GM12878 (cell line): ENCODE measurements at regions of chr22 and their contacts with region 1.

Region 1: DNA sequence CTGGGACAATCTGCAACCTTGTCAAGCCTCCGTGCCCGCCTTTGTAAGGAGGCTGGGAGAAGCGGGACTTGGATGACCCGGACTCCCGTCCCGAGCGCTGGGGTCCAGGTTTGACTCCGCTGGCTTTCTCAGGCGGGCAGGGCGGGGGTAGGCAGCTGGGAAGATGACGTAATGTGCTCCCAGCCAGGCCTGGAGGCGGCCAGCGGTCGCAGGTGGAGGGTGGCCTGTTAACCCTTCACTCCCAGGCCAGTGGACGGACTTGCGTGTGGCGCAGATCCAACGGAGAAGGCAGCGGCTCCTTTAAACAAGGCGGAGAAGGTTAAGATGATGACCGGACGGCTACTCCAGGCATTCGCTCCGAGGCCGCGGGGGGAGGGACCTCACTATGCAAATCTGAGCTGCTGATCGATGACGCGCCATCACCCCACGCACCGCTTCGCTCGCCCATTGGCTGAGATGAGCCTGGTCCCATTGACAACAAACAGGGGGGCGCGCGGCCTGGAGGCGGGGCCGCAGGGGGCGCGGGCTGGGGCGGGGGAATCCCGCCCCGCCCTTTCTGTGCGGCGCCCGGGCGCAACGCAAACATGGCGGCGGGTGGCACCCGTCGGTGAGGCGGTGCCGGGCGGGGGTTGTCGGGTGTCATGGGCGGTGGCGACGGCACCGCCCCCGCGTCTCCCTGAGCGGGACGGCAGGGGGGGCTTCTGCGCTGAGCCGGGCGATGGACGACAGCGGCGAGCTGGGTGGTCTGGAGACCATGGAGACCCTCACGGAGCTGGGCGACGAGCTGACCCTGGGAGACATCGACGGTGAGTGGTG is at the start of gene SREBF2:
- DNase-seq: peak; percentile 99
- ATAC-seq: peak; percentile 92
- H3K4me3 ChIP-seq: peak within 1 kb of the TSS; percentile 92
- H3K27ac ChIP-seq: peak within 1 kb of the TSS; percentile 95
- H3K4me1 ChIP-seq: peaks cover 12% of the 10 kb centered on the region
- H3K27me3 ChIP-seq: no peaks in the 10 kb centered on the region
- CTCF ChIP-seq: 0 out of 6 replicates have a peak, but pooled peaks of 1 of the 3 experiments have one; percentile 1
- EP300 ChIP-seq: peak; percentile 64 to 75
- POLR2A ChIP-seq: peak; percentile 94
- RAD21 ChIP-seq: no peak
- polyA plus RNA-seq, gene SREBF2: 2.4 to 3.6 TPM

Region 2: DNA sequence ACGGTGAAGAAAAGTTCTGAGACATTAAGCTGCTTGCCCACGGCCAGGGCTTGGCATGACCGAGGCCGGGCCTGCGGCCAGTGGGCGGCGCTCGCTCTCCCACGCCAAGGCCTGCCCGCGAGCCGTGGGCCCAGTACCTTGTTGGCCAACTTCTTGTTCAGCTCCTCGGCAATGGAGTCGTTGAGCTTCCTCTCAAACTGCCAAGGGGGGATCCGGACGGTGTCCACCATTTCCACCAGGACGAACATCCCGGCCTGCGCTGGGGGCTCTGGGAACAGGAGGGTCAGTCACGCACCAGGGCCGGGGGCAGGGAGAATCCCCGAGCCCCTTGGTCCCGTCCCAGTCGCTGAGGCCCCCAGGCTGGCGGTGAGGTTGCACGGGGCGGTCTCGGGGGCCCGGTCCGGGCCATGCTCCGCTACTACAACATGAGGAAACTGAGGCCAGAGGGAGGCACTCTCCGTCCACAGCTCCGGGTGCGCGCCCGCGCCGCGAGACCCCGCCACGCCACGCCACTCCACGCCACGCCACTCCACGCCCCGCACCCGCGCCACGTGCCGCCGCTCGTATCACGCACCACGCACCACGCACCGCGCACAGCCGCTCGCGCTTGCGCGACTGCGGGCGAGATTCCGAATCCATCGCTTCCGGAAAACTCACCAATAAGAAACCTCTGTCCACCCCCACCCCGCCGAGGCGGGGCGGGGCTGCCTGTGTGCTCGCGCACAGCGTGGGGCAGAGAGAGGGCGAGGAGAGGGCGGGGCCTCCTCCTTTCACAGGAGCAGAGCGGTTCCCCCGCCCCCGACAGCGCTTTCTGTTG is 288.7 kb before region 1 on chr22 and contains the start of gene POLR3H:
- CTCF ChIA-PET with region 1: no interaction called
- POLR2A ChIA-PET with region 1: no interaction called
- RAD21 ChIA-PET with region 1: no interaction called
- SMC1A ChIA-PET with region 1: no interaction called
- in situ Hi-C with region 1: no loop called
- intact Hi-C with region 1: no loop called
- DNase-seq: peak; percentile 90
- ATAC-seq: peak; percentile 97
- H3K4me3 ChIP-seq: peak within 1 kb of the TSS; percentile 88
- H3K27ac ChIP-seq: peak within 1 kb of the TSS; percentile 75
- H3K4me1 ChIP-seq: no peaks in the 10 kb centered on the region
- H3K27me3 ChIP-seq: no peaks in the 10 kb centered on the region
- CTCF ChIP-seq: peak; percentile 61 to 86 (median 77)
- EP300 ChIP-seq: no peak
- POLR2A ChIP-seq: peak; percentile 73
- RAD21 ChIP-seq: peak; percentile 28; the same call in 1 of the 2 replicates
- polyA plus RNA-seq, gene POLR3H: 3.5 to 5.8 TPM

Region 3: DNA sequence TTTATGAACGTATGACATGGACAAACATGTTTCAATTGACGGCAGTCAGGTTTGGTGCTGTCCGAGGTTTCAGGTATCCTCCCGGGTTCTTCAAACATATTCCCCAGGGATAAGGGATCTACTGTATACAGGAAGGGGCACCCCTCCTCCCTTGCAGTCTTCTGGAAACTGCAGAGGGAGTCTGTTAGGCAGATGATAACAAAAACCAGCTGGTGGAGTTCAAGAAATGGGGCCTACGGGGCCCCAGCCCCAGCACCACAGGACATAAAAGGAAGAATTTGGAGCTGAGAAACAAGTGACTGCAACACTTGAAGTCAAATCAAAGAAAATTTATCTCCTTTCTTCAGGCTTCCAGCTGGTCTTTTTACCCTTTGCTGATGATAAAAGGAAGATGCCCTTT is 176.2 kb before region 1 on chr22:
- CTCF ChIA-PET with region 1: no interaction called
- POLR2A ChIA-PET with region 1: no interaction called
- RAD21 ChIA-PET with region 1: no interaction called
- SMC1A ChIA-PET with region 1: no interaction called
- in situ Hi-C with region 1: no loop called
- intact Hi-C with region 1: no loop called
- DNase-seq: no peak
- ATAC-seq: no peak
- H3K4me3 ChIP-seq: no peak overlapping the region
- H3K27ac ChIP-seq: no peak overlapping the region
- H3K4me1 ChIP-seq: no peaks in the 10 kb centered on the region
- H3K27me3 ChIP-seq: no peaks in the 10 kb centered on the region
- CTCF ChIP-seq: no peak
- EP300 ChIP-seq: no peak
- POLR2A ChIP-seq: no peak
- RAD21 ChIP-seq: no peak

Region 4: GRCh38 chr22:41739576-41739975 is 93.2 kb before region 1 on chr22:
- CTCF ChIA-PET with region 1: no interaction called
- POLR2A ChIA-PET with region 1: no interaction called
- RAD21 ChIA-PET with region 1: no interaction called
- SMC1A ChIA-PET with region 1: no interaction called
- in situ Hi-C with region 1: no loop called
- intact Hi-C with region 1: no loop called
- DNase-seq: peak; percentile 30
- ATAC-seq: peak; percentile 73
- H3K4me3 ChIP-seq: no peak overlapping the region
- H3K27ac ChIP-seq: peak overlapping the region; percentile 26; the same call in 1 of the 2 replicates
- H3K4me1 ChIP-seq: peaks cover 7% of the 10 kb centered on the region
- H3K27me3 ChIP-seq: no peaks in the 10 kb centered on the region
- CTCF ChIP-seq: no peak
- EP300 ChIP-seq: no peak
- POLR2A ChIP-seq: no peak
- RAD21 ChIP-seq: no peak

Region 5: DNA sequence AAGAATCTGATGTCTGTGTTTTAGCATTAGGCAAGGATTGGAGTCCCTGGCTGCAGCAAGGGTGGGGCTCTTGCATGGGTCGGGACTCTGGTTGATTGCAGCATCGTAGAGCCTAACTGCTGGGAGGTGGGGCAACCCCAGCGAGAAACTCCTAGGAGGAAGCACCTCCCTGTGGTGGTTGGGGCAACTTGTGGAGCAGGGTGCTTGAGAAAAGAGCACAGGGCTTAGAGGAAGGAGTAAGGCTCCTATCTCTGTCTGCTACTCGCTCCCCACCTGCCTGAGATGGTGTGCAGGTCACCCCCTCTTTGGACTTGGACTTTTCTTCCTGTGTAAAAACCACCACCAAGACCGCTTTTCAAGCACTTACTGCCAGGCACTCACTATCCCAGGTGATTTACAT is 15.7 kb after region 1 on chr22:
- CTCF ChIA-PET with region 1: interaction called, 26 read pairs
- POLR2A ChIA-PET with region 1: interaction called, 72 read pairs
- RAD21 ChIA-PET with region 1: interaction called, 14 read pairs
- SMC1A ChIA-PET with region 1: interaction called, 62 read pairs
- in situ Hi-C with region 1: no loop called
- intact Hi-C with region 1: no loop called
- DNase-seq: no peak
- ATAC-seq: peak; percentile 63
- H3K4me3 ChIP-seq: no peak overlapping the region
- H3K27ac ChIP-seq: peak overlapping the region; percentile 30; the same call in 1 of the 2 replicates
- H3K4me1 ChIP-seq: peaks cover 18% of the 10 kb centered on the region
- H3K27me3 ChIP-seq: no peaks in the 10 kb centered on the region
- CTCF ChIP-seq: no peak; a peak in 1 of 6 replicates
- EP300 ChIP-seq: no peak
- POLR2A ChIP-seq: no peak
- RAD21 ChIP-seq: no peak

Region 6: GRCh38 chr22:41919357-41920224 is 86.8 kb after region 1 on chr22:
- CTCF ChIA-PET with region 1: no interaction called
- POLR2A ChIA-PET with region 1: interaction called, 65 read pairs
- RAD21 ChIA-PET with region 1: interaction called, 7 read pairs
- SMC1A ChIA-PET with region 1: interaction called, 10 read pairs
- in situ Hi-C with region 1: no loop called
- intact Hi-C with region 1: loop called (anchors 5 kb)
- DNase-seq: peak; percentile 71
- ATAC-seq: peak; percentile 61
- H3K4me3 ChIP-seq: peak overlapping the region; percentile 66
- H3K27ac ChIP-seq: peak overlapping the region; percentile 86
- H3K4me1 ChIP-seq: peaks cover 72% of the 10 kb centered on the region
- H3K27me3 ChIP-seq: peaks cover 0 to 3% of the 10 kb centered on the region in 2 experiments; a peak in 2 of 4 replicates
- CTCF ChIP-seq: no peak
- EP300 ChIP-seq: no peak
- POLR2A ChIP-seq: peak; percentile 85
- RAD21 ChIP-seq: no peak

Region 7: GRCh38 chr22:41946629-41947423 is 114.1 kb after region 1 on chr22 and contains the start of gene CENPM:
- CTCF ChIA-PET with region 1: interaction called, 9 read pairs
- POLR2A ChIA-PET with region 1: interaction called, 16 read pairs
- RAD21 ChIA-PET with region 1: interaction called, 84 read pairs
- SMC1A ChIA-PET with region 1: interaction called, 10 read pairs
- in situ Hi-C with region 1: loop called (anchors 5 kb)
- intact Hi-C with region 1: no loop called
- DNase-seq: peak; percentile 80
- ATAC-seq: peak; percentile 88
- H3K4me3 ChIP-seq: peak within 1 kb of the TSS; percentile 78
- H3K27ac ChIP-seq: peak within 1 kb of the TSS; percentile 94
- H3K4me1 ChIP-seq: peaks cover 59% of the 10 kb centered on the region
- H3K27me3 ChIP-seq: no peaks in the 10 kb centered on the region
- CTCF ChIP-seq: no peak
- EP300 ChIP-seq: no peak
- POLR2A ChIP-seq: peak; percentile 83
- RAD21 ChIP-seq: no peak
- polyA plus RNA-seq, gene CENPM: 36.7 to 62.3 TPM